ENCODE measurements at regions of chr1 and their contacts with region 1.

Region 1: DNA sequence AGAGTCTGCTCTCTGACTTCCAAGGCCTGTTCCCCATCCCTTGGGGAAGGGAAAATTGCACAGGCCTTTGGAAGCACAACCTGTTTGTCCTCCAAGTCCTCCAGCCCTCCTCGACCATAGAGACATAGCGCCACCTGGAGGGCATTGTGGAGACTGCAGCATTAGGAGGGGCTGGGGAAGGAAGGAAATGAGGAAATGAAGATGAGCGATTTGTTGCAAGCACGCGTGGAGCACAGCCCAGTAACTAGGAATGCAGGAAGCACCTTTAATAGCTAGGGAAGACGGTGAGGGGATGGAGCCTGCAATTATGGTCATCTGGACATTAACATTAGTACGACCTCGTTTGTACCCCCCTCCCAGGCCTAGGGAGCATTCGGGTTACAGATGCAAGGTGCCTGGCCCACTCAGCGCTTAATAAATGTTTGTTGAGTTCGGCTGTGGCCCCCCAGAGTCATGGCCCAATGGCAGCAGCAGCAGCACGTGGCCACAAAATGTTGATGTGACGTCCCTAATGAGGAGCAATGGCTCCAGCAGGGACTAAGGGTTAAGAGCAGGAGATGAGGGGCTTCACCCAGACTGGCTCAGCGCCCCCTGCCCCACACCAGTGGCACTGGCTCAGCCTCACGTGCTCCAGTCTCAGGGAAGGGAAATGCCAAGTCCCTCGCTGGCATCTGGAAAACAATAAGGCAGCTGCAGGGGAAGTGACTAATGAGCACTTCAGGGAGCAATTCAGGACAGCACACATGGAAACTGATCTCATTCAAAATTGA is 8.0 kb upstream of the CAMK2N1 start:
- DNase-seq: peak; percentile 88 to 89
- H3K4me3 ChIP-seq: no peak overlapping the region
- H3K27ac ChIP-seq: no peak overlapping the region
- H3K4me1 ChIP-seq: peaks cover 0 to 8% (median 0%) of the 10 kb centered on the region in 4 donors
- H3K27me3 ChIP-seq: peaks cover 0 to 14% of the 10 kb centered on the region in 2 donors
- CTCF ChIP-seq: peak; percentile 90 to 95

Region 2: DNA sequence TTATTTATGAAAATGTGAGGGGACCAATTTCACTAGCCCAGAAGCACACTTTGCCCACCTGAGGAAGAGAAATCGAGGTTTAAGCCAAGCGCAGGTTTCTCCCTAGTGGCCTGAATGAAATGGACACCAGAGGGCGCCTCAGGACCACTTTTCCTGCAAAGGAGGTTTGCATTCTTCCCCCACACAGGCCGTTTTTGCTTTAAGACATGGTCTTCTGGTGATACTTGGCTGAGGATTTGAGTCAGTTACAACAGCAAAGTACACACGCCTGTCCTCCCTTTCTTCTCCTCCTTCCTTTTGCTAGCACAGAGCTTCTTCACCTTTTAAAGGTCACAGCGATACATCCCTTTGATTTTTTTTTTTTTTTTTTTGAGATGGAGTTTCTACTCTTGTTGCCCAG is 576.0 kb before region 1 on chr1:
- intact Hi-C with region 1: loop called (anchors 5 kb)
- DNase-seq: peak; percentile 80 to 85
- H3K4me3 ChIP-seq: no peak overlapping the region
- H3K27ac ChIP-seq: no peak overlapping the region
- H3K4me1 ChIP-seq: no peaks in the 10 kb centered on the region
- H3K27me3 ChIP-seq: peaks cover 0 to 12% of the 10 kb centered on the region in 2 donors
- CTCF ChIP-seq: peak; percentile 79 to 91

Region 3: DNA sequence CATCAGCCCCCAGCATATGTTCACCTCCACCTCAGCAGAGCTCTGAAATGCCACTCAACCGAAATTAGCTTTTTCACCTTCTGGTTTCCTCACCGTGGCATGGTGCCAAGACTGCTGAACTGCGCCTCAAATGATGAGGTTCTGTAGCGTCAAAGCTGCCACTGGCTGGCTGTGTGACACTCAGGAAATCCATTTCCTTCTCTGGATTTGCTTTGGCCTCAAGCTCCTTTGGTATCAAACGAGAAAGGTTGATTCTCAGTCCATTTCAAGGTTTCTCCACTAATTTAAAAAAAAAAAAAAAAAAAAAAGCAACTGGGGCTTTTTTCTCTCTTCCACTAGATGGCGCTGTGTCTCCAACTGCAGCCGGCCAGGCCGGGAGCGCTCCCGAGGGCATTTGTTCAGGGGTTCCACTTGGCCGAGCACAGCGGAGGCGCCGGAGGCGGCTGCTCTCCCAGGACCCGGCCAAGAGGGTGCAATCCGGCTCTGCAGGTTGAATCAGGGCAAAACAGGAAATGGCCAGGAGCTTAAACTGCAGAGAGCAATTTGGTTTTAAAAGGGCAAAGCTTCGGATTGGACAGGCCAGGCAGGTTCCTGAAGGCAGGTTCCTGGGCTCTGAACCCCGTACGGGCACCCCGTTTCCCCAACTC is 281.2 kb before region 1 on chr1:
- intact Hi-C with region 1: loop called (anchors 5 kb)
- DNase-seq: peak; percentile 34 to 67
- H3K4me3 ChIP-seq: no peak overlapping the region
- H3K27ac ChIP-seq: no peak overlapping the region
- H3K4me1 ChIP-seq: peaks cover 0 to 12% (median 2%) of the 10 kb centered on the region in 4 donors
- H3K27me3 ChIP-seq: peaks cover 0 to 57% of the 10 kb centered on the region in 2 donors
- CTCF ChIP-seq: peak; percentile 33 to 54

Region 4: GRCh38 chr1:20361806-20362640 is 132.0 kb before region 1 on chr1:
- intact Hi-C with region 1: loop called (anchors 5 kb)
- DNase-seq: no peak
- H3K4me3 ChIP-seq: no peak overlapping the region
- H3K27ac ChIP-seq: no peak overlapping the region
- H3K4me1 ChIP-seq: peaks cover 0 to 40% (median 25%) of the 10 kb centered on the region in 4 donors
- H3K27me3 ChIP-seq: peaks cover 0 to 63% of the 10 kb centered on the region in 2 donors
- CTCF ChIP-seq: peak; percentile 31 to 34